GM12878 (cell line): ENCODE measurements at regions of chr11 and their contacts with region 1.

Region 1: GRCh38 chr11:121367001-121367843 is 74.7 kb downstream of the SC5D start:
- DNase-seq: peak; percentile 99
- ATAC-seq: peak; percentile 96
- H3K4me3 ChIP-seq: 0 out of 2 replicates have a peak overlapping the region, but pooled peaks have one; percentile 24
- H3K27ac ChIP-seq: peak overlapping the region; percentile 85
- H3K4me1 ChIP-seq: peaks cover 43% of the 10 kb centered on the region
- H3K27me3 ChIP-seq: no peaks in the 10 kb centered on the region
- CTCF ChIP-seq: no peak
- EP300 ChIP-seq: peak in 1 of 2 experiments; percentile 42; a peak in 1 of 4 replicates
- POLR2A ChIP-seq: no peak
- RAD21 ChIP-seq: no peak

Region 2: GRCh38 chr11:120925944-120926343 is 441.3 kb before region 1 on chr11:
- CTCF ChIA-PET with region 1: no interaction called
- POLR2A ChIA-PET with region 1: no interaction called
- RAD21 ChIA-PET with region 1: no interaction called
- SMC1A ChIA-PET with region 1: no interaction called
- in situ Hi-C with region 1: no loop called
- intact Hi-C with region 1: no loop called
- DNase-seq: peak; percentile 91
- ATAC-seq: peak; percentile 96
- H3K4me3 ChIP-seq: no peak overlapping the region
- H3K27ac ChIP-seq: no peak overlapping the region
- H3K4me1 ChIP-seq: peaks cover 23% of the 10 kb centered on the region
- H3K27me3 ChIP-seq: no peaks in the 10 kb centered on the region
- CTCF ChIP-seq: no peak
- EP300 ChIP-seq: peak; percentile 96 to 100
- POLR2A ChIP-seq: no peak
- RAD21 ChIP-seq: no peak

Region 3: DNA sequence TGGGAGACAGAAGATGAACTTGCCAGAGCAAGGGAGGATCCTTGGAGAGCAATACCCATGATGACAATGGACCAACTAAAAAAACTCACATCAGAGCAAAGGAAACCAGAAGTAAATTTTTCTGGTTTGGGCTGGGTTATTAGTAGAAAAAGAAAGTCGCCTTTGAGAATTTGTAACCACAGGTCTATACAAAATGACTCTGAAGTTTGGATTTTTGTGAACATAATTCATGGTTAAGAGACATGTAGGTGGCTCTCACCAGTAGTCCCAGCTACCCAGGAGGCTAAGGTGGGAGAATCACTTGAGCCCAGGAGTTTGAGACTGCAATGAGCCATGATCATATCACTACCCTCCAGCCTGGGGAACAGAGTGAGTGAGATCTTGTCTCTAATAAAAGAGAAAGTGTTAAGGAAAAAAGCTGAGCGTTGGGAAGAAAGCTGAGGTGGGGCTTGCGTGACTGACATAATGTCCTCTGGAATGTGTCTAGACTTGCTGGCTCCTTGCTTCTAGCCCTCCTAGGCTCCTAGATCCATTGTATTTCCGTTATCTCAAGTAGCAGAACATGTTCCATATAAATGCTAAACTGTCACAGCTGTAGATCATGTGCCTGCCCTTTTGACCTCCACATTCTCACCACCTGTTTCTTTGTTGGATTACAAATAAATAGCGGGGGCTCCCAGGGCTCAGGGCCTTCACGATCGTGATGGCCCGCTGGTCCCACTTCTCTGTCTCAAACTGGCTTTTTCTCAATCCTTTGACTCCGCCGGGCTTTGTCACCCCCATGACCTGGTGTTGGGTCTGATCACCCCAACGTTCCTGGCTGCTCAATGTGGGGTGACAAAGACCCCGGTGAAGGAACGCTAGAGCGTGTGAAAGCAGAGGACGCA is 130.9 kb before region 1 on chr11:
- CTCF ChIA-PET with region 1: interaction called, 4 read pairs
- POLR2A ChIA-PET with region 1: no interaction called
- RAD21 ChIA-PET with region 1: interaction called, 3 read pairs
- SMC1A ChIA-PET with region 1: interaction called, 6 read pairs
- in situ Hi-C with region 1: no loop called
- intact Hi-C with region 1: loop called (anchors 5 kb)
- DNase-seq: peak; percentile 74
- ATAC-seq: peak; percentile 85
- H3K4me3 ChIP-seq: peak overlapping the region; percentile 57
- H3K27ac ChIP-seq: peak overlapping the region; percentile 95
- H3K4me1 ChIP-seq: peaks cover 32% of the 10 kb centered on the region
- H3K27me3 ChIP-seq: no peaks in the 10 kb centered on the region
- CTCF ChIP-seq: no peak
- EP300 ChIP-seq: no peak; a peak in 1 of 4 replicates
- POLR2A ChIP-seq: no peak
- RAD21 ChIP-seq: no peak

Region 4: DNA sequence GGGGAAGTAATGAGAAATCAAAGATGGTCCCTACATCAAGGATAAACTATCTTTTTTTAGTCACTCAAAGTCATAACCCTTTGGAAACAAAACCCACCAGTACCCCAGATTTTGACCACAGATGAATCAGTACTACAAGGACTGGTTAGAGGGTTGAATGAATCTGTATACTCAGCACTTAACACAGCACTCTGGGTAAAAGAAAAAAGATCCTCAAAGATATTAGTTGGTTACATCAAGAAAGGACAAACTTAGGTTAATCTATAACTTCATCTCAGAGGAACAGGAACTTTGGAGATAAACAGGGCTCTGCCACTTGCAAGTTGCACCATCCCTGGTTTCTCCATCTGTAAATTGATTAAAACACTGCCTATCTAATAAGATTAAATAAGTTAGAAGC is 55.8 kb before region 1 on chr11:
- CTCF ChIA-PET with region 1: no interaction called
- POLR2A ChIA-PET with region 1: no interaction called
- RAD21 ChIA-PET with region 1: no interaction called
- SMC1A ChIA-PET with region 1: no interaction called
- in situ Hi-C with region 1: no loop called
- intact Hi-C with region 1: no loop called
- DNase-seq: no peak
- ATAC-seq: peak; percentile 55
- H3K4me3 ChIP-seq: no peak overlapping the region
- H3K27ac ChIP-seq: no peak overlapping the region
- H3K4me1 ChIP-seq: peaks cover 14% of the 10 kb centered on the region
- H3K27me3 ChIP-seq: no peaks in the 10 kb centered on the region
- CTCF ChIP-seq: no peak
- EP300 ChIP-seq: no peak
- POLR2A ChIP-seq: no peak
- RAD21 ChIP-seq: no peak

Region 5: DNA sequence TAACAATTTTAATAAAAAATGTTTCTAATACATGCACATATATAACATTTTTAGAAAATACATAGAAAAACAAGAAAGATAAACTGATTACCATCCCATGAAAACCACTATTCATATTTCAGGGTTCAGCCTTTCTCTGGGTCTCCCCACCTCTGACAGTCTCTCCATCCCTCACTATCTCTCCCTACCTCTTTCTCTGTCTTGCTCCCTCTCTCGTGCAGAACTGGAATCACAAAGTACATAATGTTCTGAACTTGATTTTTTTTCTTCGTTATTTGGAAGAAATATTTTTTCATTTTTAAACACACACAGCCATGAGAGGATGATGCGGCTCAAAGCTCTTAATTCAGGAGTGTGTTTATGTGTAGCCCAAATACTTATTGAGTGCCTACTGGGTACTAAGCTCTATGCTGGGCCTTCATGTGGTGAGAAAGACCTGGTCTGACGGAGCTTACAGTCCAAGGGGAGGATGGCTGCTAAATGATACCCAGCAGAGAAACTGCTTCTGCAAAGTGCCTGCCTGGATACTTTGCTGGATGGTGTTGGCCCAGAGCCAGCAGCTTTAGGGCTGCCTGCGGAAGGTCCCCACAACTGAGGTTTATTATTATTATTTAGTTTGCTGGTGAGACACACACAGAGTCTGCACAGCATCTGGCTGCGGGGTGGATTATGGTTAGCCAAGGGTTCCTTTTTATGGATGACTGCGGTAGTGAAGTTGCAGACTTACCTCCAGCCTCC is 32.1 kb before region 1 on chr11:
- CTCF ChIA-PET with region 1: interaction called, 26 read pairs
- POLR2A ChIA-PET with region 1: interaction called, 70 read pairs
- RAD21 ChIA-PET with region 1: interaction called, 92 read pairs
- SMC1A ChIA-PET with region 1: interaction called, 338 read pairs
- in situ Hi-C with region 1: no loop called
- intact Hi-C with region 1: loop called (anchors 2 kb)
- DNase-seq: no peak
- ATAC-seq: no peak
- H3K4me3 ChIP-seq: no peak overlapping the region
- H3K27ac ChIP-seq: no peak overlapping the region
- H3K4me1 ChIP-seq: peaks cover 49% of the 10 kb centered on the region
- H3K27me3 ChIP-seq: no peaks in the 10 kb centered on the region
- CTCF ChIP-seq: peak in 1 of 3 experiments; percentile 9; a peak in 1 of 6 replicates
- EP300 ChIP-seq: no peak
- POLR2A ChIP-seq: no peak
- RAD21 ChIP-seq: no peak

Region 6: DNA sequence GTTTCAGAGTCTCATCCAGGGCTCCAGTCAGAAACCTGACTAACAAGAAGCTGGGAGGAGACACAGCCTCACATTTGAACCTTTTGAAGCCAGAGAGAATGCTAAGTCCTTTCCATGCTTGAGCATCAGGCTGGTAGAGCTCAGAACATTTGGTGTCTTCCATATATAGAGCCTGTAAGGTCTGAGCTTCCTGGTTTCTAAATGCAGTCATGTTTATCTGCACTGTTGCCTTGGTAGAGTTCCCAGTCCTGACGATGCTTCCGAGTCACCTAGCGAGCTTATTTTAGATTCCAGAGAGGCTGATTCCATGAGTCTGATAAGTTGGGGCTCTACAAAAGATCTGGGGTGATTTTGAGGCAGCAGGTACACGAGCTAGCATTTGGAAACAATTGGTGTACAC is 16.5 kb after region 1 on chr11:
- CTCF ChIA-PET with region 1: interaction called, 14 read pairs
- POLR2A ChIA-PET with region 1: interaction called, 4 read pairs
- RAD21 ChIA-PET with region 1: interaction called, 12 read pairs
- SMC1A ChIA-PET with region 1: interaction called, 47 read pairs
- in situ Hi-C with region 1: no loop called
- intact Hi-C with region 1: no loop called
- DNase-seq: no peak
- ATAC-seq: no peak
- H3K4me3 ChIP-seq: no peak overlapping the region
- H3K27ac ChIP-seq: no peak overlapping the region
- H3K4me1 ChIP-seq: no peaks in the 10 kb centered on the region
- H3K27me3 ChIP-seq: no peaks in the 10 kb centered on the region
- CTCF ChIP-seq: no peak
- EP300 ChIP-seq: no peak
- POLR2A ChIP-seq: no peak
- RAD21 ChIP-seq: no peak

Region 7: GRCh38 chr11:121426476-121427399 is 59.5 kb after region 1 on chr11:
- CTCF ChIA-PET with region 1: interaction called, 8 read pairs
- POLR2A ChIA-PET with region 1: interaction called, 9 read pairs
- RAD21 ChIA-PET with region 1: interaction called, 16 read pairs
- SMC1A ChIA-PET with region 1: interaction called, 103 read pairs
- in situ Hi-C with region 1: no loop called
- intact Hi-C with region 1: loop called (anchors 5 kb)
- DNase-seq: no peak
- ATAC-seq: peak; percentile 57
- H3K4me3 ChIP-seq: peak overlapping the region; percentile 39; the same call in 1 of the 2 replicates
- H3K27ac ChIP-seq: no peak overlapping the region
- H3K4me1 ChIP-seq: peaks cover 46% of the 10 kb centered on the region
- H3K27me3 ChIP-seq: no peaks in the 10 kb centered on the region
- CTCF ChIP-seq: peak in 2 of 3 experiments; percentile 14 to 21; a peak in 1 of 6 replicates
- EP300 ChIP-seq: no peak
- POLR2A ChIP-seq: no peak
- RAD21 ChIP-seq: no peak

Region 8: DNA sequence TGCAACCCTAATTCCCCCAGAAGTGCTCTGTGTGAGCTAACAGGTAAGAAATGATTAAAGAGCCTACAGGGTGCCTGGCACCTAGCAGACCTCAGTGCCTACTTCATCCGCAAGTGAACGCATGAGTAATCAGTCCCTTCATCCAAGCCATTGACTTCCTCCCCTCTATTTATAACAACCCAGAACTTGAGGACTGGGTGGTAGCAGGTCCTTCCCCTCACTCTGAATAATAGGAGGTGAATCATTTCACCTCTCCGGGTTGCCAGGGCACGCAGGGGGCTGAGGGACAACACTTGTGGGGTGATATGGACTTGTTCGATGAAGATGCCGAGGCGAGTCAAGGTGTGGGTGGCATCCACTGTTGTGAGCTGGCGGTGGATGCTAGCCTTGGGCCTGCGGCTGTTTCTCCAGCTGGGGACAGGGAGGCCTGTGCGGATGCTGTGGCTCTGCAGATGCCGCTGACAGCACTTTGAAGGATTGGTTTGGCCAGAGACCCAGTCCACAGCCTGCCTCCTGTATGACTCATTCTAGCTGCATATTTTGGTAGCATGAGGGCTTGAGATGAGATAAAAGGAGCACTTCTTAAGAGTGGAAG is 97.2 kb after region 1 on chr11:
- CTCF ChIA-PET with region 1: interaction called, 3 read pairs
- POLR2A ChIA-PET with region 1: interaction called, 8 read pairs
- RAD21 ChIA-PET with region 1: interaction called, 42 read pairs
- SMC1A ChIA-PET with region 1: interaction called, 45 read pairs
- in situ Hi-C with region 1: no loop called
- intact Hi-C with region 1: no loop called
- DNase-seq: no peak
- ATAC-seq: peak; percentile 64
- H3K4me3 ChIP-seq: peak overlapping the region; percentile 57; the same call in 1 of the 2 replicates
- H3K27ac ChIP-seq: peak overlapping the region; percentile 83
- H3K4me1 ChIP-seq: peaks cover 91% of the 10 kb centered on the region
- H3K27me3 ChIP-seq: no peaks in the 10 kb centered on the region
- CTCF ChIP-seq: no peak
- EP300 ChIP-seq: no peak; a peak in 1 of 4 replicates
- POLR2A ChIP-seq: peak; percentile 72
- RAD21 ChIP-seq: no peak